Breast epithelium (tissue), 4 donors: ENCODE measurements at regions of chr6 and their contacts with region 1.

Region 1: GRCh38 chr6:46453221-46453620 is 38.0 kb downstream of the RCAN2 start:
- DNase-seq: no peak
- H3K4me3 ChIP-seq: no peak overlapping the region
- H3K27ac ChIP-seq: no peak overlapping the region
- H3K4me1 ChIP-seq: peaks cover 0 to 5% of the 10 kb centered on the region in 2 donors
- H3K27me3 ChIP-seq: no peaks in the 10 kb centered on the region
- CTCF ChIP-seq: no peak
- POLR2A ChIP-seq: no peak

Region 2: GRCh38 chr6:46465294-46466165 is 12.3 kb after region 1 on chr6:
- intact Hi-C with region 1: loop called (anchors 1 kb)
- DNase-seq: no peak
- H3K4me3 ChIP-seq: no peak overlapping the region
- H3K27ac ChIP-seq: no peak overlapping the region
- H3K4me1 ChIP-seq: no peaks in the 10 kb centered on the region
- H3K27me3 ChIP-seq: no peaks in the 10 kb centered on the region
- CTCF ChIP-seq: no peak
- POLR2A ChIP-seq: no peak

Region 3: GRCh38 chr6:46476301-46476700 is 23.1 kb after region 1 on chr6:
- intact Hi-C with region 1: no loop called
- DNase-seq: no peak
- H3K4me3 ChIP-seq: no peak overlapping the region
- H3K27ac ChIP-seq: no peak overlapping the region
- H3K4me1 ChIP-seq: no peaks in the 10 kb centered on the region
- H3K27me3 ChIP-seq: no peaks in the 10 kb centered on the region
- CTCF ChIP-seq: no peak
- POLR2A ChIP-seq: no peak

Region 4: DNA sequence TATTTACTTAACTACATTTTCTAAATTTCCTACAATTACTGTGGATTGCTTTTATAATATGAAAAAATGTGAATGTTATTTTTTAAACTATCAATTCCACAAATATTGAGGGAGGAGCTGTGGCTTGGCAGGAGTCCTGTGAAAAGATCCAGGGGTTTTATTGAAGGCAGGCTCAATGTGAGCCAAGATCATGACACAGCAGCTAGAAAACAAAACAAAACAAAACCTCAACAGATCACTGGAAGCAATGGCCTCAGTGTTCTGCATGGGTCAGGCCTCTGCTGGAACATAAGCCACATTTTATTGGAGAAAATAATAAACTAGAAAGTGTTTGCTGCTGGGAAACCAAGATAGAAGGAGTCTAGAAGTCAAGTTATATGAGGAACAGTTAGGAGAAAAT is 57.4 kb after region 1 on chr6:
- intact Hi-C with region 1: no loop called
- DNase-seq: no peak
- H3K4me3 ChIP-seq: no peak overlapping the region
- H3K27ac ChIP-seq: peak overlapping the region in 1 of 2 donors; percentile 43
- H3K4me1 ChIP-seq: no peaks in the 10 kb centered on the region
- H3K27me3 ChIP-seq: no peaks in the 10 kb centered on the region
- CTCF ChIP-seq: no peak
- POLR2A ChIP-seq: no peak